ENCODE measurements at regions of chr13 and their contacts with region 1.

Region 1: GRCh38 chr13:20160847-20161274 is at the start of gene GJA3:
- DNase-seq: peak; percentile 55 to 60
- H3K4me3 ChIP-seq: peak within 1 kb of the TSS; percentile 44
- H3K4me3 Mint-ChIP-seq: peak within 1 kb of the TSS; percentile 76
- H3K27ac Mint-ChIP-seq: no peak within 1 kb of the TSS
- H3K4me1 ChIP-seq: peaks cover 21% of the 10 kb centered on the region
- H3K4me1 Mint-ChIP-seq: peaks cover 8% of the 10 kb centered on the region
- H3K27me3 ChIP-seq: peaks cover 4% of the 10 kb centered on the region; the same call in 1 of the 2 replicates
- H3K27me3 Mint-ChIP-seq: peaks cover 15% of the 10 kb centered on the region
- CTCF ChIP-seq: no peak
- total RNA-seq, gene GJA3: 0.09 and 0.11 TPM in 2 replicates

Region 2: GRCh38 chr13:19984430-19985218 is 176.2 kb before region 1 on chr13:
- CTCF ChIA-PET with region 1: interaction called, 6 read pairs
- POLR2A ChIA-PET with region 1: no interaction called
- intact Hi-C with region 1: loop called (anchors 1 kb)
- DNase-seq: peak in 1 of 2 experiments; percentile 21
- H3K4me3 ChIP-seq: no peak overlapping the region
- H3K4me3 Mint-ChIP-seq: no peak overlapping the region
- H3K27ac Mint-ChIP-seq: no peak overlapping the region
- H3K4me1 ChIP-seq: 0 out of 2 replicates have a peak, but pooled peaks cover 6% of the 10 kb centered on the region
- H3K4me1 Mint-ChIP-seq: peaks cover 7% of the 10 kb centered on the region
- H3K27me3 ChIP-seq: no peaks in the 10 kb centered on the region
- H3K27me3 Mint-ChIP-seq: no peaks in the 10 kb centered on the region
- CTCF ChIP-seq: peak; percentile 46 to 77

Region 3: DNA sequence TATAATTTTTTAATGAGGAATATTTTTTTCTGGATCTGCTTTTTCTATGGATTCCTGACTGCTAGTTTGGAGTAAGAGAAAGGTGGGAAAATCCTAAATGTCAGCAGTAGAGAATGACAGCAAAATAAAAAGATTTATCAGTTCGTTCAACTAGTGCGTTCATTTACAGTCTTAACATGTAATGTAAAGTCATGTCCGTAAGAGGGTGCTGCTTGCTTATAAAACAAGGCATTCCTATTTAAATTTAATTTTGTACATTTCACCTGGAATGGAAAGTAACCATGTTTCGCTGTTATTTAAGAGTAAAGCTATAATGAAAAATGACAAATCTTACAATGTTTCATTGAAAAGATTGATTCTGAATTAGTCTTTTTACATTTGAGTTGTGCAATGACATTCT is 125.7 kb before region 1 on chr13:
- CTCF ChIA-PET with region 1: no interaction called
- POLR2A ChIA-PET with region 1: no interaction called
- intact Hi-C with region 1: loop called (anchors 5 kb)
- DNase-seq: no peak
- H3K4me3 ChIP-seq: no peak overlapping the region
- H3K4me3 Mint-ChIP-seq: no peak overlapping the region
- H3K27ac Mint-ChIP-seq: no peak overlapping the region
- H3K4me1 ChIP-seq: no peaks in the 10 kb centered on the region
- H3K4me1 Mint-ChIP-seq: peaks cover 1% of the 10 kb centered on the region
- H3K27me3 ChIP-seq: no peaks in the 10 kb centered on the region
- H3K27me3 Mint-ChIP-seq: no peaks in the 10 kb centered on the region
- CTCF ChIP-seq: peak; percentile 15 to 16

Region 4: GRCh38 chr13:20057963-20058362 is 102.9 kb before region 1 on chr13:
- CTCF ChIA-PET with region 1: no interaction called
- POLR2A ChIA-PET with region 1: no interaction called
- intact Hi-C with region 1: loop called (anchors 1 kb)
- DNase-seq: no peak
- H3K4me3 ChIP-seq: no peak overlapping the region
- H3K4me3 Mint-ChIP-seq: no peak overlapping the region
- H3K27ac Mint-ChIP-seq: no peak overlapping the region
- H3K4me1 ChIP-seq: no peaks in the 10 kb centered on the region
- H3K4me1 Mint-ChIP-seq: no peaks in the 10 kb centered on the region
- H3K27me3 ChIP-seq: no peaks in the 10 kb centered on the region
- H3K27me3 Mint-ChIP-seq: no peaks in the 10 kb centered on the region
- CTCF ChIP-seq: no peak

Region 5: DNA sequence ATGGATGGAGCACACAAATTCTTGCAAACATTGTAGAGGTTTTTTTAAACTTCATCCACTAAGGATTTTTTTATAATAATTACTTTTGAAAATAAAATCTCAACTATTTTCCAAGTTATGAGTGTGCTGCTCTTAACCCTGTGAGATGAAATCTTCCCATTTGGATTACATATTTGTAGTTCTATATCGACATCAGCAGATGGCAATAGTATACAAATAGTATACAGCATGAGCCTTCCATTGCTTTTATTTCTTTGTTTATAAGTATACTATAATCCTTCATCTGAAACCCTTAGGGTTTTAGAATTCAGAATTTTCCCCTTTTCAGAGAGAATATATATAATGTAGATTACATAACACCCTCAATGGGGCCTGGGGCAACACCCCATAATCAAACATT is 70.5 kb before region 1 on chr13:
- CTCF ChIA-PET with region 1: no interaction called
- POLR2A ChIA-PET with region 1: interaction called, 3 read pairs
- intact Hi-C with region 1: loop called (anchors 2 kb)
- DNase-seq: no peak
- H3K4me3 ChIP-seq: no peak overlapping the region
- H3K4me3 Mint-ChIP-seq: no peak overlapping the region
- H3K27ac Mint-ChIP-seq: no peak overlapping the region
- H3K4me1 ChIP-seq: no peaks in the 10 kb centered on the region
- H3K4me1 Mint-ChIP-seq: no peaks in the 10 kb centered on the region
- H3K27me3 ChIP-seq: no peaks in the 10 kb centered on the region
- H3K27me3 Mint-ChIP-seq: no peaks in the 10 kb centered on the region
- CTCF ChIP-seq: peak in 1 of 2 experiments; percentile 4

Region 6: GRCh38 chr13:20127577-20128466 is 33.0 kb before region 1 on chr13:
- CTCF ChIA-PET with region 1: interaction called, 11 read pairs
- POLR2A ChIA-PET with region 1: no interaction called
- intact Hi-C with region 1: loop called (anchors 1 kb)
- DNase-seq: peak; percentile 69 to 84
- H3K4me3 ChIP-seq: peak overlapping the region; percentile 81
- H3K4me3 Mint-ChIP-seq: peak overlapping the region; percentile 64
- H3K27ac Mint-ChIP-seq: no peak overlapping the region
- H3K4me1 ChIP-seq: no peaks in the 10 kb centered on the region
- H3K4me1 Mint-ChIP-seq: peaks cover 6% of the 10 kb centered on the region
- H3K27me3 ChIP-seq: no peaks in the 10 kb centered on the region
- H3K27me3 Mint-ChIP-seq: peaks cover 3% of the 10 kb centered on the region
- CTCF ChIP-seq: peak in 1 of 2 experiments; percentile 74

Region 7: GRCh38 chr13:20136781-20137703 is 23.8 kb before region 1 on chr13:
- CTCF ChIA-PET with region 1: no interaction called
- POLR2A ChIA-PET with region 1: no interaction called
- intact Hi-C with region 1: loop called (anchors 1 kb)
- DNase-seq: peak; percentile 54 to 76
- H3K4me3 ChIP-seq: peak overlapping the region; percentile 30
- H3K4me3 Mint-ChIP-seq: peak overlapping the region; percentile 54
- H3K27ac Mint-ChIP-seq: no peak overlapping the region
- H3K4me1 ChIP-seq: peaks cover 4% of the 10 kb centered on the region; the same call in 1 of the 2 replicates
- H3K4me1 Mint-ChIP-seq: no peaks in the 10 kb centered on the region
- H3K27me3 ChIP-seq: no peaks in the 10 kb centered on the region
- H3K27me3 Mint-ChIP-seq: no peaks in the 10 kb centered on the region
- CTCF ChIP-seq: peak; percentile 51 to 82

Region 8: GRCh38 chr13:20264271-20265018 is 103.6 kb after region 1 on chr13:
- CTCF ChIA-PET with region 1: no interaction called
- POLR2A ChIA-PET with region 1: no interaction called
- intact Hi-C with region 1: no loop called
- DNase-seq: no peak
- H3K4me3 ChIP-seq: no peak overlapping the region
- H3K4me3 Mint-ChIP-seq: no peak overlapping the region
- H3K27ac Mint-ChIP-seq: no peak overlapping the region
- H3K4me1 ChIP-seq: no peaks in the 10 kb centered on the region
- H3K4me1 Mint-ChIP-seq: peaks cover 13% of the 10 kb centered on the region
- H3K27me3 ChIP-seq: no peaks in the 10 kb centered on the region; the same call in 1 of the 2 replicates
- H3K27me3 Mint-ChIP-seq: peaks cover 9% of the 10 kb centered on the region
- CTCF ChIP-seq: no peak

Measured in Caco-2 (cell line).